GM12878 (cell line): ENCODE measurements at regions of chr14 and their contacts with region 1.

Region 1: GRCh38 chr14:101687756-101688546 is 73.6 kb upstream of the PPP2R5C start:
- DNase-seq: no peak
- ATAC-seq: no peak
- H3K4me3 ChIP-seq: no peak overlapping the region
- H3K27ac ChIP-seq: no peak overlapping the region
- H3K4me1 ChIP-seq: no peaks in the 10 kb centered on the region
- H3K27me3 ChIP-seq: no peaks in the 10 kb centered on the region
- CTCF ChIP-seq: no peak
- EP300 ChIP-seq: no peak
- POLR2A ChIP-seq: no peak
- RAD21 ChIP-seq: no peak

Region 2: GRCh38 chr14:101737414-101738339 is 49.7 kb after region 1 on chr14:
- CTCF ChIA-PET with region 1: no interaction called
- POLR2A ChIA-PET with region 1: interaction called, 10 read pairs
- RAD21 ChIA-PET with region 1: no interaction called
- SMC1A ChIA-PET with region 1: no interaction called
- in situ Hi-C with region 1: no loop called
- intact Hi-C with region 1: no loop called
- DNase-seq: no peak
- ATAC-seq: peak; percentile 58
- H3K4me3 ChIP-seq: no peak overlapping the region
- H3K27ac ChIP-seq: no peak overlapping the region
- H3K4me1 ChIP-seq: no peaks in the 10 kb centered on the region
- H3K27me3 ChIP-seq: no peaks in the 10 kb centered on the region
- CTCF ChIP-seq: peak; percentile 30 to 44 (median 40); a peak in 4 of 6 replicates
- EP300 ChIP-seq: no peak
- POLR2A ChIP-seq: no peak
- RAD21 ChIP-seq: peak; percentile 28; the same call in 1 of the 2 replicates